OCI-LY7 (cell line): ENCODE measurements at regions of chr14 and their contacts with region 1.

Region 1: GRCh38 chr14:38721822-38722431 is 381.1 kb downstream of the SEC23A start:
- DNase-seq: peak; percentile 37
- H3K4me3 ChIP-seq: no peak overlapping the region
- H3K27ac ChIP-seq: no peak overlapping the region
- H3K4me1 ChIP-seq: peaks cover 5% of the 10 kb centered on the region
- CTCF ChIP-seq: peak; percentile 84

Region 2: GRCh38 chr14:39015360-39015961 is 293.5 kb after region 1 on chr14:
- CTCF ChIA-PET with region 1: no interaction called
- POLR2A ChIA-PET with region 1: no interaction called
- intact Hi-C with region 1: loop called (anchors 5 kb)
- DNase-seq: peak; percentile 54
- H3K4me3 ChIP-seq: no peak overlapping the region
- H3K27ac ChIP-seq: no peak overlapping the region
- H3K4me1 ChIP-seq: no peaks in the 10 kb centered on the region
- CTCF ChIP-seq: peak; percentile 98